Psoas muscle (tissue), 8 donors: ENCODE measurements at regions of chr20 and their contacts with region 1.

Region 1: DNA sequence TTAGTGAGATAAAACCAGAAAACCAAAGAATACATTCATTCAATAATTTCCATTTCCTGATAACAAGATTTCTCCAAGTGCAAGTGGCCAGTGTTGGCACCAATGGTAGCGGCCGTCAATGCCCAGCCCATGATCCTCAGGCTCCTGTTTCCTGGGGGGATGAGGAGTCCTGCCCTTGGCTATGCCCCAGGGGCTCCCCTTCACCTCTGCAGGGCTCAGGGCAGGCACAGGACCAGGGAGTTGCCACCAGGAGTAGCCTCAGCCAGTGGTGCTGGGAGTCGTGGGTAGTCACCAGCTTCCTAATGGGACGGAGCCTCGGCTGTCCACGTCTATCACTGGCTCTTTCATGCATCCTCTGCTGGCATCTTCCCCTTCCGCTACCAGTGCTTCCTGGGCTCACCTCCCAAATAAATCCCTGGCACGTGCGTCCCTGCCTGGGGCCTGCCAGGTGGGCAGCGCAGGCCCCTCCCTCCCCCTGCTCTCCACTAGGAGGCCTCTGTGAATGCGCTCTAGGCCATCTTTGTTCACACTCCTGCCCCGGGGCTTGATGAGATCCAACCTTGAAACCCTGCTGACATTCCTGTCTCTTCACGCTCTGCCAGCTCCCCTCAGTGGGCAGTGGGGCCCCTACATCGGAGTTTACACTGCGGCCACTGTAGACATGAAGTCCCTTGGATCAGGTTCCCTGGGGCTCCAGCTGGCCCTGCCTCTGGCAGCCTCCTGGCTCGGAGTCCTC is 215.7 kb downstream of the SYNDIG1 start:
- DNase-seq: no peak
- ATAC-seq: no peak
- H3K4me3 ChIP-seq: no peak overlapping the region
- H3K27ac ChIP-seq: no peak overlapping the region
- H3K4me1 ChIP-seq: no peaks in the 10 kb centered on the region
- H3K27me3 ChIP-seq: peaks cover 0 to 2% (median 0%) of the 10 kb centered on the region in 3 donors
- CTCF ChIP-seq: no peak

Region 2: GRCh38 chr20:24746351-24746685 is 61.2 kb after region 1 on chr20:
- intact Hi-C with region 1: loop called in 1 of 2 experiments (anchors 10 kb)
- DNase-seq: no peak
- ATAC-seq: no peak
- H3K4me3 ChIP-seq: no peak overlapping the region
- H3K27ac ChIP-seq: no peak overlapping the region
- H3K4me1 ChIP-seq: no peaks in the 10 kb centered on the region
- H3K27me3 ChIP-seq: no peaks in the 10 kb centered on the region
- CTCF ChIP-seq: no peak